Transverse colon (tissue), 4 donors: ENCODE measurements at regions of chr5 and their contacts with region 1.

Region 1: GRCh38 chr5:153159611-153160010 is 330.9 kb upstream of the GRIA1 start:
- DNase-seq: no peak
- H3K4me3 ChIP-seq: no peak overlapping the region
- H3K27ac ChIP-seq: no peak overlapping the region
- H3K4me1 ChIP-seq: no peaks in the 10 kb centered on the region
- H3K27me3 ChIP-seq: no peaks in the 10 kb centered on the region
- CTCF ChIP-seq: no peak
- EP300 ChIP-seq: no peak
- POLR2A ChIP-seq: no peak

Region 2: DNA sequence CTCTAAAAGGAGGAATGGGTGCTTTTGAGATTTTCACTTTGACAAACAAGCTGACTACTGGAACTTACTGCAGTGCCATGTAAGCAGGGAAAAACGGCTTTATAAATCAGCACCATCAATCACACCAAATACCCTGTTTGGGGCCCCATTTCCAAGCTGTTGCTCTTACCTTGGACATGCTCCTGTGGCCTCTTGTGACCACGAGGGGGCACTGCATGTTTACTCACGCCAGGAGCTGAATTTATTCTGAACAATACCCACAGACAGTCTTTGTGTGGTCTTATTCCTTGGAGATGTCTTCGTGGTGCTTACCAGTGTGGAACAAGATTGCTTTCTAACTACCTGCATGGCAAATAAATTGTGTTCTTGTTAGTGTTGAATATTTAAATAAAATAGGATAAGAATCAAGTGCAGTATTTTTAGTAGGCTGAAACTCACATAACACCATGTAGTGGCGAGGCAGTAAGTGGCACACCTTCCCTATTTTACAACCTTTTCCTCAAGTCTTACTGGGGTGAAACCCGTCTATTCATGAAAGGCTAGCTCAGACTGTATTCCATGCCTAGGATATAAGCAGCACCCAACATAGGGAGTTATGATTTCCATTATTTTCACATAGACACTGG is 599.0 kb before region 1 on chr5:
- in situ Hi-C with region 1: loop called in 1 of 4 experiments (anchors 10 kb)
- intact Hi-C with region 1: no loop called
- DNase-seq: peak; percentile 46
- H3K4me3 ChIP-seq: no peak overlapping the region
- H3K27ac ChIP-seq: no peak overlapping the region
- H3K4me1 ChIP-seq: no peaks in the 10 kb centered on the region
- H3K27me3 ChIP-seq: no peaks in the 10 kb centered on the region
- CTCF ChIP-seq: peak; percentile 52 to 62 (median 58)
- EP300 ChIP-seq: no peak
- POLR2A ChIP-seq: no peak

Region 3: GRCh38 chr5:153136910-153137614 is 22.5 kb before region 1 on chr5:
- in situ Hi-C with region 1: no loop called
- intact Hi-C with region 1: loop called (anchors 1 kb)
- DNase-seq: no peak
- H3K4me3 ChIP-seq: no peak overlapping the region
- H3K27ac ChIP-seq: no peak overlapping the region
- H3K4me1 ChIP-seq: no peaks in the 10 kb centered on the region
- H3K27me3 ChIP-seq: no peaks in the 10 kb centered on the region
- CTCF ChIP-seq: no peak
- EP300 ChIP-seq: no peak
- POLR2A ChIP-seq: no peak